ENCODE measurements at regions of chr15 and their contacts with region 1.

Region 1: DNA sequence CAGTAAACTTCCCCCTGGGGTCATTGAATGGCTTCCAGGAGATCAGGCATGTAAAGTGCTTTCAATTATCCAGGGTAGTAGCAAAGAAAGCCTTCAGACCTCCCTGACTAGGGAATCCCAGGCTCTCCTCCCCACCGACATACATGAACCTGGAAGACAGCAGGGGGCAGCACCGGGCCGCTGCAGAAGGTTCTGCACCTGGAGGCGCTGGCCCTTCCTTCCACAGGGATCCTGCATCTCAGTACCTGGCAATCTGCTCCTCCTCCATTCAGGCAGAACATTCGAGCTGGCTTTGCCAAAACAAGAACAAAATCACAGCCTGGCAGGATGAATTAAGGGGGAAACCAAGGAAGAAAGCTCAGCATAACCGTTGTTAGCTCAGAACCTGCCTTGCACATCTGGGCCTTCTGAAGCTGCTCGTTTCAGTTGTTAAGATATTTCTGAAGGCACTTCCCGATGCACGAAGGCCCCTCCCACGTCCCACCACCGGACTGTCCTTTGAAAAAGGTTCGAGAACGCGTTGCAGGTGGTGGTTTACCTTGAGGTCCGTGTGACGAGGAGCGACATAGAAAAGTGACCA is 237.7 kb downstream of the SLCO3A1 start:
- DNase-seq: peak; percentile 46 to 60
- ATAC-seq: peak; percentile 86 to 98
- H3K4me3 ChIP-seq: no peak overlapping the region
- H3K27ac ChIP-seq: no peak overlapping the region
- H3K4me1 ChIP-seq: no peaks in the 10 kb centered on the region
- CTCF ChIP-seq: peak; percentile 65
- EP300 ChIP-seq: no peak
- POLR2A ChIP-seq: no peak
- RAD21 ChIP-seq: peak; percentile 57 to 68

Region 2: DNA sequence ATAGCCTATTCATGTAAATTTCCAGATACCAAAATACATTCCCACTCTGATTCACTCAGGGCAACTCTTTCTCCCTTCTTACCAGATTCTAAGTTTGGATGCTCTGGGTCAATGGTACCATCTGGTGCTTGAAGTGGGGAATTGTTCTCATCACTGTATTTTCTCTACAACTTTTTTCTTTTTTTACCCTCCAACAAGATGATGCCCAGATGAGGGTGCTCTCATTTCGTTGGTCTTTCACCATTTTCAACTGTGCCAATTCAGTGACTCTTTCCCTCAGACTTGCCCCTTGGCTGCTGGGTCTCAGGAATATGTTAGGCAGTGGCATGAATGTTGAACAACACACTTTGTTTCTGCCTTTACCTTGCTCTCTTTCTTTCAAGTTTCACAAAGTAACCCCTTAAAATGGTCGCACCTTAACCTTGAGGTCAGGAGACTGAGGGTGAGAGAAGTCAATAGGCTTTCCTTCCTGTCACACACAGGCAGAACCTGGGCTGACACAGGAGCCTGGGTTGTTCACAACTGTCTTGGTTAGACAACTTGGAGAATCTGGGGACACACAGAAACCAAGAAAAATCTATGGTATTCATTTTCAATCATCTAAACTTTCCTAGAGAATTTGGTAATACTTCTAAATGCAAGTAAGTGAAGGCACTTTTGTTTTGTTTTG is 568.4 kb before region 1 on chr15:
- CTCF ChIA-PET with region 1: no interaction called
- POLR2A ChIA-PET with region 1: no interaction called
- DNase-seq: peak in 1 of 2 experiments; percentile 59
- ATAC-seq: peak; percentile 60 to 77; a peak in 3 of 6 replicates
- H3K4me3 ChIP-seq: no peak overlapping the region
- H3K27ac ChIP-seq: no peak overlapping the region
- H3K4me1 ChIP-seq: peaks cover 9% of the 10 kb centered on the region; the same call in 2 of the 3 replicates
- CTCF ChIP-seq: peak; percentile 65
- EP300 ChIP-seq: no peak
- POLR2A ChIP-seq: no peak
- RAD21 ChIP-seq: peak; percentile 73 to 86

Region 3: DNA sequence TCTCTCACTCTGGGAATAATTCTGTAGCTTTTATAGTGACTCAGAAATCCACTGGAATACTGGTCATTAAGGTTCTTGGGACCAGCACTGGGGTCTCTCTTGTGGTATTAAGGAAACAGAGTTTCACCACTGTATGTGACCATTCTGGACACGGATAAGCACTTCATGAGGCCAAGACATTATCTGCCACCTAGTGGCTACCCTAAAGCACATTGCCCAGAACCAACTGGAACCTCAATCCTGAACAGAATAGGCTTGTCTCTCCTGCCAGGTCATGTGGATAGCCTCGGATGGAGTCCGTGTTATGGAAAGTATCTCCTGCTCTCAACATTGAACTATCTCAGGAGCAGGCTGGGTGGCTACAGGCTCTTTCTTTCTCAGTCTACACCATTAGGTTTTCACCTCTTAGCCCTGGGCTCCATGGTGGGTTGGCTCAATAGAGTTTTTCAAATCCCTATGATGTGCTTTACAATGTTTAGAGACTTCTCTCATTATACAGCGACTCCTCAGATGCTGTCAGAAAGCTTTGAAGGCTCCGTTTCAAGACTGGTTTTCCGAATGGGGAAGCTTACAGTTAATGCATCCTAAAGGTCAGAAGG is 134.9 kb after region 1 on chr15:
- CTCF ChIA-PET with region 1: interaction called, 15 read pairs
- POLR2A ChIA-PET with region 1: no interaction called
- DNase-seq: peak in 1 of 2 experiments; percentile 32
- ATAC-seq: peak; percentile 71 to 91; a peak in 4 of 6 replicates
- H3K4me3 ChIP-seq: no peak overlapping the region
- H3K27ac ChIP-seq: no peak overlapping the region
- H3K4me1 ChIP-seq: no peaks in the 10 kb centered on the region
- CTCF ChIP-seq: peak; percentile 39
- EP300 ChIP-seq: no peak
- POLR2A ChIP-seq: no peak
- RAD21 ChIP-seq: peak in 1 of 2 experiments; percentile 55; a peak in 2 of 5 replicates